HCT116 (cell line): ENCODE measurements at regions of chr12 and their contacts with region 1.

Region 1: GRCh38 chr12:124036674-124037109 is 63.7 kb downstream of the ZNF664 start:
- DNase-seq: peak; percentile 15
- ATAC-seq: peak; percentile 71
- H3K4me3 ChIP-seq: no peak overlapping the region
- H3K27ac ChIP-seq: no peak overlapping the region
- H3K4me1 ChIP-seq: no peaks in the 10 kb centered on the region
- H3K27me3 ChIP-seq: no peaks in the 10 kb centered on the region
- CTCF ChIP-seq: peak; percentile 83 to 94 (median 91)
- POLR2A ChIP-seq: no peak
- RAD21 ChIP-seq: peak; percentile 95

Region 2: GRCh38 chr12:123801573-123802178 is 235.0 kb before region 1 on chr12:
- CTCF ChIA-PET with region 1: interaction called, 4 read pairs
- POLR2A ChIA-PET with region 1: no interaction called
- RAD21 ChIA-PET with region 1: no interaction called
- intact Hi-C with region 1: loop called (anchors 1 kb)
- DNase-seq: peak; percentile 26
- ATAC-seq: peak; percentile 27; the same call in 1 of the 2 replicates
- H3K4me3 ChIP-seq: no peak overlapping the region
- H3K27ac ChIP-seq: no peak overlapping the region
- H3K4me1 ChIP-seq: no peaks in the 10 kb centered on the region
- H3K27me3 ChIP-seq: no peaks in the 10 kb centered on the region
- CTCF ChIP-seq: peak; percentile 36 to 77 (median 51)
- POLR2A ChIP-seq: no peak
- RAD21 ChIP-seq: peak; percentile 75

Region 3: GRCh38 chr12:124097701-124098100 is 61.0 kb after region 1 on chr12:
- CTCF ChIA-PET with region 1: no interaction called
- POLR2A ChIA-PET with region 1: no interaction called
- RAD21 ChIA-PET with region 1: no interaction called
- intact Hi-C with region 1: no loop called
- DNase-seq: no peak
- ATAC-seq: no peak
- H3K4me3 ChIP-seq: no peak overlapping the region
- H3K27ac ChIP-seq: no peak overlapping the region
- H3K4me1 ChIP-seq: no peaks in the 10 kb centered on the region
- H3K27me3 ChIP-seq: peaks cover 16% of the 10 kb centered on the region; the same call in 1 of the 2 replicates
- CTCF ChIP-seq: no peak
- POLR2A ChIP-seq: no peak
- RAD21 ChIP-seq: no peak

Region 4: DNA sequence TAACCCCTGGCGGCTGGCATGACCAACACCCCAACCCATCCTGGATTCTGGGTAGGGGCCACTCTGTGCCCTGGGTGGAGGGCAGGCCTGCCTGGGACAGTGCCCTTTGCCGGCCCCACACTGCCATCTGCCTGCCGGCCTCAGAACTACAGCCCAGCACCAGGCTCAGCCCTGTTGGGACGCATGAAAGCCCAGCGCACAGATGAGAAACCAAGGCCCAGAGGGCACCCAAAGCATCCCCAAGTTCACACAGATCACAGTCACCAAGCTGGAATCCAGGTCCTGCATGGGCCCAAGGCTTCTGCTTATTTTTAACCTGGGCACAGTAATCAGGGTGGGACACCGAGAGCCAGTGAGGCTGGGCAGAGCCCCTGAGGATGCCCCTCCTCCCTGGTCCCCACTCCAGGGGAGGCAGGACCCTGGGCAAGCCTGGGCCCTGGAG is 284.4 kb after region 1 on chr12:
- CTCF ChIA-PET with region 1: interaction called, 7 read pairs
- POLR2A ChIA-PET with region 1: no interaction called
- RAD21 ChIA-PET with region 1: no interaction called
- intact Hi-C with region 1: loop called (anchors 1 kb)
- DNase-seq: no peak
- ATAC-seq: peak; percentile 95
- H3K4me3 ChIP-seq: no peak overlapping the region
- H3K27ac ChIP-seq: no peak overlapping the region
- H3K4me1 ChIP-seq: no peaks in the 10 kb centered on the region
- H3K27me3 ChIP-seq: no peaks in the 10 kb centered on the region
- CTCF ChIP-seq: peak; percentile 80 to 94 (median 94)
- POLR2A ChIP-seq: no peak
- RAD21 ChIP-seq: peak; percentile 96

Region 5: GRCh38 chr12:124551268-124552144 is 514.8 kb after region 1 on chr12:
- CTCF ChIA-PET with region 1: no interaction called
- POLR2A ChIA-PET with region 1: no interaction called
- RAD21 ChIA-PET with region 1: no interaction called
- intact Hi-C with region 1: loop called (anchors 10 kb)
- DNase-seq: no peak
- ATAC-seq: peak; percentile 50
- H3K4me3 ChIP-seq: no peak overlapping the region
- H3K27ac ChIP-seq: peak overlapping the region; percentile 3; the same call in 1 of the 2 replicates
- H3K4me1 ChIP-seq: peaks cover 30 to 54% of the 10 kb centered on the region in 2 experiments
- H3K27me3 ChIP-seq: no peaks in the 10 kb centered on the region
- CTCF ChIP-seq: no peak
- POLR2A ChIP-seq: no peak
- RAD21 ChIP-seq: 0 out of 2 replicates have a peak, but pooled peaks have one; percentile 18

Region 6: GRCh38 chr12:124767066-124767821 is 730.6 kb after region 1 on chr12:
- CTCF ChIA-PET with region 1: interaction called, 10 read pairs
- POLR2A ChIA-PET with region 1: no interaction called
- RAD21 ChIA-PET with region 1: interaction called in 1 of 2 experiments, 3 read pairs
- intact Hi-C with region 1: loop called (anchors 1 kb)
- DNase-seq: no peak
- ATAC-seq: peak; percentile 87
- H3K4me3 ChIP-seq: no peak overlapping the region
- H3K27ac ChIP-seq: no peak overlapping the region
- H3K4me1 ChIP-seq: peaks cover 0 to 8% of the 10 kb centered on the region in 2 experiments; a peak in 1 of 4 replicates
- H3K27me3 ChIP-seq: no peaks in the 10 kb centered on the region
- CTCF ChIP-seq: peak; percentile 81 to 98 (median 90)
- POLR2A ChIP-seq: no peak
- RAD21 ChIP-seq: peak; percentile 98

Region 7: DNA sequence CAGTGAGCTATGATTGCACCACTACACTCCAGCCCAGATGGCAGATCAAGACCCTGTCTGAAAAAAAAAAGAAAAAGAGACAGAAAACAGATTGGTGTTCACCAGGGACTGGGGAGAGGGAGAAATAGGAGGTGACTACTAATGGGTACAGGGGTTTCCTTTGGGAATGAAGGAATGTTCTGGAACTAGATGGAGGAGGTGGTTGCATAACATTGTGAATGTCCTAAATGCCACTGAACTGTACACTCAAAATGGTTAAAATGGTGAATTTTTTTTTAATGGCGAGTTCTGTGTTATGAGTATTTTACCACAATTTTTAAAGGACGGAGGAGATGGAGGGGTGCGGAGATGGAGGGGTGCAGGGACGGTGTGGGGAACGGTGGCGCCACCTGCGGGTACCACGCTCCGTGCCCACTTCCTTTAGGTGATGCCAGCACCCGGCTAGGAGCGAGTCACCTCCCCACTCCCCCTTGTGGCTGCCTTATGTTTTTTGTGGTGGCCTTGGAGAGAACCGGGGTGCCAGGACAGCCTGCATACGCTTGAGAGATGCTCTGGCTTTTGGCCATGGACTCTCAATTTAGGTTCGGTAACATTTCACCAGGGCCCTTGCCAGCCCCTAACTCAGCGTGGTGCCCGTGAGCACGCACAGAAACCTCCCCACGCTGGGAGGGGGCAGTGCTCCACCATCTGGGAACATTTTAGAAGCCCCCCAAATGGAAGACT is 861.7 kb after region 1 on chr12:
- CTCF ChIA-PET with region 1: no interaction called
- POLR2A ChIA-PET with region 1: no interaction called
- RAD21 ChIA-PET with region 1: no interaction called
- intact Hi-C with region 1: loop called (anchors 5 kb)
- DNase-seq: no peak
- ATAC-seq: peak; percentile 95
- H3K4me3 ChIP-seq: no peak overlapping the region
- H3K27ac ChIP-seq: no peak overlapping the region
- H3K4me1 ChIP-seq: peaks cover 6 to 20% of the 10 kb centered on the region in 2 experiments; a peak in 3 of 4 replicates
- H3K27me3 ChIP-seq: no peaks in the 10 kb centered on the region
- CTCF ChIP-seq: peak; percentile 84 to 99 (median 96)
- POLR2A ChIP-seq: no peak
- RAD21 ChIP-seq: peak; percentile 88